GM13977 (cell line): ENCODE measurements at regions of chr14 and their contacts with region 1.

Region 1: DNA sequence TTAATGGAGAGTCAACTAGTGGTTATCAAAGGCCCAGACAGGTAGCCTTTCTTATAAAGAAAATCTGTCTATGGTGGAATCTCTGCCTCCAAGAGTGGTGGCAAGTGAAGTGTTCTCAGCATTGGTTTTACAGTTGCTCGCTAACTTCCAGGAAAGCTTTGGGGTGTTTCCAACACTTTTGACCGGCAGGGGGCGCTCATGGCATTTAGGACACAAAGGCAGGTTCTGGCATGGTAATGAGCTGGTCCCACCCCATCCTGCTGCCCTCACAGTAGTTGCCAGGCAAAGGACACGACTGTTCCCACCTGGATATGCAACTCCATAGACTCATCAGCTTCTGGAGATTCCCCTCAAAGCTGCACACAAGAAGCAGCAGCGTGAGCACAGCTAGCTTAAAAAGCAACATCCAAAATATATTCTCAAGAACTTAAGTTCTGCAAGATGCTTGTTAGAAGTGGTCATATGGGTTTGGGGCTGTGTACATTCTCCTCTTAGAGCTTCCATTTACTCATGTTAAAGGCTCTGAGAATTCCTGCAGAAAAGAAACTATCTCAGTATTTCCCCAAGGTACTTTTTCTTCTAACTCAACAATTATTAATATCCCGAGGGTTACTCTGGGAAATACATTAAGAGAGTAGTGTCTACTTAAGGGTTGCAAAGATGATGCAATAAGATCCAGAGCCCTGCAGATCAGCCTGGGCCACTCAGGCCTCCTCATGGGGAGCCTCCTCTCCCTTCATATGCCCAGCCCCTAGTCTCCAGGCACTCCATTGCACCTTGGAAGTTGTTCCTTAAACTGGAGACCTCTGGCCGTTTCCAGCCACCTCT is 14.8 kb downstream of the PROX2 start:
- DNase-seq: peak; percentile 78
- CTCF ChIP-seq: peak; percentile 82

Region 2: DNA sequence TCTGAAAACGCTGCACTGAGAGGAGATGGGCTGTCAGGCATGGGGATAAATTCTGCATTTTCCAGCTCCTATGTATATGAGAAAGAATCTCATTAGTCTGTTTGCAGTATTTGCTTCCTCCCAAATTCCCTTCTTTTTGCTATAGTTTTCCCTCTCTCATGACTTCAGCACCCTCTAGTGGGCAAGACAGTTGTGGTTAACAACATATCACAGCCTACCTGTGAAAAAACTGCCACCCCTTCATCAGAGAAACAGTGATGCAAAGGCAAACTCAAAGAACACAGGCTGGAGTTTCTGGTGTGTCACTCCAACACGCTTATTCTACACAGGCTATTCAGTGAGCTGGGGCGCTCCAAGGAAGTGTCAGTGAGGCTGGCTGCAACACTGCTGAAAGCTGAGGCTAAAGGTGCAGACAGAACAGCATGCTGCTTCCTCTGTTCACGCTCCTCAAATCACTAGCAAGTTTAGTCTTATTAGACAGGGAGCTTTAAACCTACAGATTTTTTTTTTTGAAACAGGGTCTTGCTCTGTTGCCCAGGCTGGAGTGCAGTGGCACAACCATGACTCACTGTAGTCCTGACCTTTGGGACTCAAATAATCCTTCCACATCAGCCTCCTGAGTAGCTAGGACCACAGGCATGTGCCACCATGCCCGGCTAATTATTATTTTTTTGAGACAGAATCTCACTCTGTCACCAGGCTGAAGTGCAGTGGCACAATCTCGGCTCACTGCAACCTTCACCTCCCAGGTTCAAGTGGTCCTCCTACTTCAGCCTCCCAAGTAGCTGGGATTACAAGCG is 227.7 kb after region 1 on chr14:
- in situ Hi-C with region 1: loop called (anchors 25 kb)
- DNase-seq: peak; percentile 34
- CTCF ChIP-seq: peak; percentile 68

Region 3: GRCh38 chr14:76413962-76414625 is 1553.0 kb after region 1 on chr14:
- in situ Hi-C with region 1: no loop called
- DNase-seq: no peak
- CTCF ChIP-seq: no peak